Esophagus muscularis mucosa (tissue), 4 donors: ENCODE measurements at regions of chr12 and their contacts with region 1.

Region 1: GRCh38 chr12:81644503-81644902 is 114.6 kb downstream of the PPFIA2 start:
- DNase-seq: no peak
- H3K4me3 ChIP-seq: no peak overlapping the region
- H3K27ac ChIP-seq: no peak overlapping the region
- H3K4me1 ChIP-seq: peaks cover 0 to 4% (median 0%) of the 10 kb centered on the region in 4 donors
- H3K27me3 ChIP-seq: no peaks in the 10 kb centered on the region
- CTCF ChIP-seq: peak; percentile 53 to 56 (median 56)
- EP300 ChIP-seq: no peak
- POLR2A ChIP-seq: no peak

Region 2: GRCh38 chr12:82326905-82327503 is 682.5 kb after region 1 on chr12:
- intact Hi-C with region 1: loop called (anchors 5 kb)
- DNase-seq: no peak
- H3K4me3 ChIP-seq: no peak overlapping the region
- H3K27ac ChIP-seq: no peak overlapping the region
- H3K4me1 ChIP-seq: no peaks in the 10 kb centered on the region
- H3K27me3 ChIP-seq: no peaks in the 10 kb centered on the region
- CTCF ChIP-seq: peak; percentile 40 to 52 (median 44)
- EP300 ChIP-seq: no peak
- POLR2A ChIP-seq: no peak

Region 3: DNA sequence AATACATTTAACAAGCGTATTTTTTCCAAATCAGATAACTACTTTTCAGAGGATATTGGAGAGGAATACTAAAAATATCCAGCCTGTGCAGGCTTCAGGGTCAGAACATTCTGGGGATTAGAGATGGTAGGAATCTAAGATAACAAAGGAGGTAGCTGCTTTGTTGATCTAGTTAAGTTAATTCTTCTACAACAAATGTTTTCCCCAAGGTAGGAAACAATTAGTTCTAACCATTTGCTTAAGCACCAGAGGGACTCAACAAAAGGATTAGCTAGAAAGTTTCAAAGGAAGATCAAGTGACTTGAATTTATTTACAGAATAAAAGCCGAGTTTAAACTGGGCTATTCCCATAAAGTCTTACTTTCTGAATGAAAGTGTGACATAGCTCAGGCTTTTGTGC is 1566.4 kb after region 1 on chr12:
- intact Hi-C with region 1: no loop called
- DNase-seq: no peak
- H3K4me3 ChIP-seq: no peak overlapping the region
- H3K27ac ChIP-seq: no peak overlapping the region
- H3K4me1 ChIP-seq: no peaks in the 10 kb centered on the region
- H3K27me3 ChIP-seq: no peaks in the 10 kb centered on the region
- CTCF ChIP-seq: no peak
- EP300 ChIP-seq: no peak
- POLR2A ChIP-seq: no peak